Activated T-helper 1 cell treated with anti-CD3 and anti-CD28 coated beads, Interleukin-12 subunit alpha, Interleukin-12 subunit beta, Interleukin-2, Interleukin-4 antibody, amounts not matched to agents 30 ng/mL and 10 ng/mL and 1 ng/mL, durations not matched to agents 14 hours and 24 hours and 36 hours (primary cell): ENCODE measurements at regions of chr9 and their contacts with region 1.

Region 1: DNA sequence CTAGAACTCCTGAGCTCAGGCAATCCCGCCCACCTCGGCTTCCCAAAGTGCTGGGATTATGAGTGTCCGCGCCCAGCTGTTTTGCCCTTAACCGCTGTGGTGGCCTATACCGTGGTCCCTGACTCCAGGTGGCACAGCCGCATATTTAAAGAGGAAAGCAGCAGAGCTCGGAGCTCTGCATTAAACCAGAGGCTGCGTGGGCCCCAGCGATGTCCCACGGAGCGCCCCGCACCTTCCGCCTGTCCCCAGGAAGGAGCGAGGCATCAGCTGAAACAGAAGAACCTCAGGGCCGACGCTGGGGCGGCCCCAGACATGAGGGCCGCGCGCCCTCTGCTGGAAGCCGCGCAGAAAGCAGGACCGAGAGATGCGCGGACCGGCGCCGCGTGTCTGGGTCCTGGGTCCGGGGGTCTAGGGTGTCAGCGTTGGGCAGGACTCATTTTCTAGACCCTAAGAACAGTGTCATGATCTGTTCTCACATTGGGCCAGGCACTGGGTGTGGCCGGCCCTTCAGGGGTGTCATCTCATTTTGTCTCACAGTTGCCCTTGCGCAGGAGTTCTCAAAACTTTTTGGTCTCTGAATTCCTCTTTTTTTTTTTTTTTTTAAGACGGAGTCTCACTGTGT is 37.7 kb downstream of the LAMC3 start:
- DNase-seq: peak; percentile 60
- H3K4me3 Mint-ChIP-seq: no peak overlapping the region
- H3K27ac Mint-ChIP-seq: no peak overlapping the region
- H3K4me1 Mint-ChIP-seq: no peaks in the 10 kb centered on the region
- H3K27me3 Mint-ChIP-seq: peaks cover 2% of the 10 kb centered on the region

Region 2: DNA sequence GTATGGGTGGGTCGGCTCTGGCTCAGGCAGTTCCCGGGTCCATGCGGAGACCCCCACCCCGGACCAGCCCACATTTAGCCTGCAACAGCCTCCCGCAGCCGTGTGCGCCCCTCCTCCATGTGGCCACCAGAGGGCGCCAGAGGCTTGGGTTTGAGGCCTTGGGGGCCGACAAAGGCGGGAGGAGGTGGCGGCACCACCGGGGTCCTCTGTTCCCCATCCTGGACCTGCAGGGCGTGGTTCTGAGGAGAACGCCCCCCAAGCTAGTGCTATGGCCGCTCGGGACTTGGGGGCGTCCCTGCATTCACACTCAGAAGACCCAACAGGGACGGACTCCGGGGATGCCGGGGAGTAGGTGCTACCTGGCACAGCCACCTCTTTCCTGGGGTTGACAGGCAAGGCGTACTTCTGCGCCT is 585.5 kb before region 1 on chr9:
- intact Hi-C with region 1: loop called (anchors 5 kb)
- DNase-seq: peak; percentile 38
- H3K4me3 Mint-ChIP-seq: no peak overlapping the region
- H3K27ac Mint-ChIP-seq: no peak overlapping the region
- H3K4me1 Mint-ChIP-seq: no peaks in the 10 kb centered on the region
- H3K27me3 Mint-ChIP-seq: peaks cover 7% of the 10 kb centered on the region

Region 3: DNA sequence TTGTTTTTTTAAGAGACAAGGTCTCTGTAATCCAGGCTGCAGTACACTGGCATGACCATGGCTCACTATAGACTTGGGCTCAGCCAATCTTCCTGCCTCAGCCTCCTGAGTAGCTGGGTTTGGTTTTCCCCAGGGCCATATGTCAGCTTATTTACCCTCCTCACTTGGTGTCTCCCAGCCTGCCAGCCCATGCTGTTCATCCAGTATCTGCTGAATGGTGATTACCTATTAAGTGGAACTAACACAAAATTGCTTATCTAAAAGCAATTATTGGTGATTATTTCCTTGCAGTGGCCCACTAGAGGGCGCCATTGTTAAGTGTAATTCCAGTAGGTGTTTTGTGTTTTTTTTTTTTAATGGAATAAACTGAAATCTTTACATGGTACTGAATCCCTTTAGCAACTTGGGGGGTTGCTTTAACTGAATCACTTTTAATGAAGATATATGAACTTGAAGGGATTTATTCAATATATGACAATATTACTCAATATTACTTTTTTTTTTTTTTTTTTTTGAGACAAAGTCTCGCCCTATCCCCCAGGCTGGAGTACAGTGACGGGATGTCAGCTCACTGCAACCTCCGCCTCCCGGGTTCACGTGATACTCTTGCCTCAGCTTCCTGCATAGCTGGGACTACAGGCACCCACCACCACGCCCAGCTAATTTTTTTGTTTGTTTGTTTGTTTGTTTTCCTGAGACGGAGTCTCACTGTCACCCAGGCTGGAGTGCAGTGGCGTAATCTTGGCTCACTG is 339.3 kb before region 1 on chr9:
- intact Hi-C with region 1: loop called (anchors 2 kb)
- DNase-seq: peak; percentile 52
- H3K4me3 Mint-ChIP-seq: no peak overlapping the region
- H3K27ac Mint-ChIP-seq: peak overlapping the region; percentile 56
- H3K4me1 Mint-ChIP-seq: peaks cover 3% of the 10 kb centered on the region
- H3K27me3 Mint-ChIP-seq: no peaks in the 10 kb centered on the region

Region 4: DNA sequence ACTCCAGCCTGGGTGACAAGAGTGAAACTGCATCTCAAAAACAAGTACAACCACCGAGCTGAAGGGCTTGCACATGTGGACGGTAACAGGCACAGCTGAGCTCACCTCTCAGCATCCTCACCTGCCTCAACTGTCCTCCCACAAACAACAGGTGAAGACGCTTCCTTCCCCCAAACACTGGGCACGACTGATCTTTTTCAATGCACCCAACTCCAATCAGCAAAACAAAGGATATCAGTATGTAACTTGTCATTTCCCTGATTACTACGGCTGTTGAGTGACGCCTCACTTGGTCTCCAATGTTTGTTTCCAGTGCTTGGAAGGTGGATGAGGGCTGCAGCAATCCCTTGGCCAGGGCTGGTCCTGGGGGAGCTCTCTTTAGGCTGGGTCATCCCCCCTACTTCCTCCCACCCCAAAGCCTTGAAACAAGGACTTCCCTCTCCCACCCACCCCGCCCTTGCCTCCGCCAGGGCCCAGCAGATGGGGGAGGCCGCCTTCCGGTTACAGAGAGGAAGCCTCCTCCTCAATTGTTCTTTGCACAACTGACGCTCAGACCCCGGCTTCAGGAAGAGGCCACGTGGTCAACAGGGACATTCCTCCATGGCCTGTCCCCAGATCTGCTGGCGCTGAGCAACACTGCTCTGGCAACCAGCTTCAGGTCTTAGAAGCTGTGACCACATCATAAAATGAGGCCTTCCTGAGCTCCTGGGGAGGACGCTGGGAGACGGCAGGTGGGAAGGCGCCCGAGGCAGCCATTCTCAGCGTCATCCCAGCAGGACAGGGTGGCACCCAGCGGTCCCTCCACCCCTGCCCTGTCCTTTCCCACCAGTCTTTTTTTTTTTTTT is 223.7 kb after region 1 on chr9:
- intact Hi-C with region 1: no loop called
- DNase-seq: no peak
- H3K4me3 Mint-ChIP-seq: peak overlapping the region; percentile 100
- H3K27ac Mint-ChIP-seq: peak overlapping the region; percentile 86
- H3K4me1 Mint-ChIP-seq: peaks cover 75% of the 10 kb centered on the region
- H3K27me3 Mint-ChIP-seq: no peaks in the 10 kb centered on the region